Uterus (tissue), 4 donors: ENCODE measurements at regions of chr1 and their contacts with region 1.

Region 1: GRCh38 chr1:182084487-182085316 is 23.2 kb upstream of the ZNF648 start:
- DNase-seq: peak; percentile 91 to 92
- H3K4me3 ChIP-seq: no peak overlapping the region
- H3K27ac ChIP-seq: peak overlapping the region; percentile 76 to 88
- H3K4me1 ChIP-seq: no peaks in the 10 kb centered on the region
- H3K27me3 ChIP-seq: no peaks in the 10 kb centered on the region
- CTCF ChIP-seq: peak; percentile 87 to 96 (median 92)
- POLR2A ChIP-seq: no peak

Region 2: GRCh38 chr1:182003953-182004586 is 80.6 kb before region 1 on chr1:
- intact Hi-C with region 1: no loop called
- DNase-seq: peak in 1 of 2 donors; percentile 19
- H3K4me3 ChIP-seq: no peak overlapping the region
- H3K27ac ChIP-seq: no peak overlapping the region
- H3K4me1 ChIP-seq: no peaks in the 10 kb centered on the region
- H3K27me3 ChIP-seq: no peaks in the 10 kb centered on the region
- CTCF ChIP-seq: no peak
- POLR2A ChIP-seq: no peak

Region 3: GRCh38 chr1:182143154-182143657 is 58.5 kb after region 1 on chr1:
- intact Hi-C with region 1: loop called (anchors 10 kb)
- DNase-seq: peak; percentile 94 to 96
- H3K4me3 ChIP-seq: no peak overlapping the region
- H3K27ac ChIP-seq: peak overlapping the region; percentile 92 to 99
- H3K4me1 ChIP-seq: peaks cover 9 to 15% of the 10 kb centered on the region in 2 donors
- H3K27me3 ChIP-seq: no peaks in the 10 kb centered on the region
- CTCF ChIP-seq: peak; percentile 91 to 97 (median 95)
- POLR2A ChIP-seq: peak in 1 of 2 donors; percentile 8

Region 4: DNA sequence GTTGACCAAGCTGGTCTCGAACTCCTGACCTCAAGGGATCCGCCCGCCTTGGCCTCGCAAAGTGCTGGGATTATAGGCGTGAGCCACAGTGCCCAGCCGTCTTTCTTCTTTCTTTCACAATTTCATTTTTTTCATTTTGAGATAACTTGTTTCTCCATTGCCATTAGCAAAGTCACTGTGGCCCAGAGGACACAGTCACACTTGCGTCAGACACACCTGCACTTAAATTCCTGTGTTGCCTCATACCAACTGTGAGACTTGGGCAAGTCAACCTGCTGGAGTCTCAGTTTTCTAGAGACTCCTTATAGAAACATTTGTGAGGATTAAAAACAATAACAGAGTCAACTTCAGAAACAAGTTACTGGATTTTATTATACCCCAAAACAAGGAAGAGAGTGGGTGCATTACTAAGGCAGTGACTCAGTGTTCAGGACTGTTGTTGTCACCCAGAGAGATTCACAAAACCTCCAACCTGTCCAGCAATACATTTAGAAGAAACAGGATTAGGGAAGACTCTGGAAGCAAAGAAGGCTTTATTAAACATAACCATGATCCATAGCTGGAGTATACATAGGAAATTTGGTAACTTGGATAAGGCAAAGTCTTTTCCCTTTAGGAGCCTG is 313.2 kb after region 1 on chr1:
- intact Hi-C with region 1: loop called (anchors 2 kb)
- DNase-seq: no peak
- H3K4me3 ChIP-seq: no peak overlapping the region
- H3K27ac ChIP-seq: peak overlapping the region; percentile 78 to 98
- H3K4me1 ChIP-seq: peaks cover 0 to 8% of the 10 kb centered on the region in 2 donors
- H3K27me3 ChIP-seq: no peaks in the 10 kb centered on the region
- CTCF ChIP-seq: no peak
- POLR2A ChIP-seq: no peak

Region 5: GRCh38 chr1:182789138-182790076 is 704.7 kb after region 1 on chr1 and contains the start of gene NPL:
- intact Hi-C with region 1: loop called (anchors 10 kb)
- DNase-seq: peak; percentile 67 to 83
- H3K4me3 ChIP-seq: peak within 1 kb of the TSS; percentile 60 to 73
- H3K27ac ChIP-seq: peak within 1 kb of the TSS; percentile 54 to 71
- H3K4me1 ChIP-seq: no peaks in the 10 kb centered on the region
- H3K27me3 ChIP-seq: no peaks in the 10 kb centered on the region
- CTCF ChIP-seq: peak in 2 of 4 experiments; percentile 6 to 11
- POLR2A ChIP-seq: peak; percentile 75 to 84
- total RNA-seq, gene NPL: 0.29 to 9.9 (median 4.4) TPM